ENCODE measurements at regions of chr3 and their contacts with region 1.

Region 1: DNA sequence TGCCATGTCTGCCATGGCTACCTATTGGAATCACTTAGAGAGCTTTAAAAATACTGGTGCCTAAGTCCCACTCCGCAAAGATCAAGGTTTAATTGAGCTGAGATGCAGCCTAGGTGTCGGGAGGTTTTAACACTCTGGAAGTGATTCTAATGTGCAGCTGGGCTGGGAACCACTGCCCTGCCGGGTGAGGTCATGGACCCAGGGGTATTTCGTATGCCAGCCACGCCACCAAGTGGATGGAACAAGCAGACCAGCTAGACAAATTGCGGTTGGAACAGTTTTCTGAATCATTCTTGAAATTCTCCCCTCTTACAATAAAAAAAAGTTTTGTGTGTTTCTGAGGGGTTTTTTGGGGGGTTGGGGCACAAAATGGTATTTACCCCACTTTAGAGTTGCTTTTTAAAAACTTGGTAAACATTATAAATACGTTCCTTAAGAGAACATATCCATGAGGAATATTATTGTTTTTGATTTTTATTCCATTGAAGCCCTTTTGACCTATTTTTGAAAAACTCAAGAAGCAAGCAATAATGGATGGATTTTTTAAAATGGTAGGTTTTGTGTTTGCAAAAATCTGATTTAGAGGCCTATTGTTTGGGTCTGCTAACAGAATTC is 66.2 kb upstream of the CSTA start:
- DNase-seq: peak; percentile 83
- ATAC-seq: peak; percentile 92
- H3K4me3 Mint-ChIP-seq: no peak overlapping the region
- H3K27ac Mint-ChIP-seq: no peak overlapping the region
- H3K4me1 Mint-ChIP-seq: peaks cover 18% of the 10 kb centered on the region
- H3K27me3 Mint-ChIP-seq: no peaks in the 10 kb centered on the region

Region 2: DNA sequence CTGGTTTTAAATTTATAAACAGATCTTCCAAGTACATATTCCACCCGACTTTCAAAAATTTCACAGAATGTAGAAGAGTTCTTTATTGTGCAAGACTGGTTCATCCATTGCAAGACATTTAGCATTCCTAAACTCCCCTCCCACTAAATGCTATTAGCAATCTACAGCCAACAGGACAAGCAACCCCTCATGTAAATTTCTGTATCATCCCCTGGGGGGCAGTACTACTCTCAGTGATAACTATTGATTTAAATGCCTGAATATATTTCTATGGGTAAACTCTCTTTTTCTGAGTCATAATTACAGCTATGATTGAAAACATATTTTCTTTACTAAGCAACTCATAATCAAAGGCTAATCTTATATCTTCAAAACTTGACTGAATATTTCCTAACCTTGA is 375.4 kb before region 1 on chr3:
- CTCF ChIA-PET with region 1: no interaction called
- POLR2A ChIA-PET with region 1: no interaction called
- intact Hi-C with region 1: loop called (anchors 2 to 10 kb)
- DNase-seq: peak; percentile 5
- ATAC-seq: peak; percentile 60
- H3K4me3 Mint-ChIP-seq: no peak overlapping the region
- H3K27ac Mint-ChIP-seq: no peak overlapping the region
- H3K4me1 Mint-ChIP-seq: no peaks in the 10 kb centered on the region
- H3K27me3 Mint-ChIP-seq: no peaks in the 10 kb centered on the region

Region 3: GRCh38 chr3:122233101-122233952 is 25.5 kb before region 1 on chr3:
- CTCF ChIA-PET with region 1: interaction called, 4 read pairs
- POLR2A ChIA-PET with region 1: no interaction called
- intact Hi-C with region 1: loop called in 1 of 2 experiments (anchors 2 kb)
- DNase-seq: peak; percentile 34
- ATAC-seq: peak; percentile 70
- H3K4me3 Mint-ChIP-seq: no peak overlapping the region
- H3K27ac Mint-ChIP-seq: peak overlapping the region; percentile 27
- H3K4me1 Mint-ChIP-seq: peaks cover 25% of the 10 kb centered on the region
- H3K27me3 Mint-ChIP-seq: peaks cover 11% of the 10 kb centered on the region

Region 4: GRCh38 chr3:122299872-122300460 is 41.1 kb after region 1 on chr3:
- CTCF ChIA-PET with region 1: interaction called, 10 read pairs
- POLR2A ChIA-PET with region 1: no interaction called
- intact Hi-C with region 1: loop called (anchors 2 kb)
- DNase-seq: peak; percentile 53
- ATAC-seq: peak; percentile 59
- H3K4me3 Mint-ChIP-seq: no peak overlapping the region
- H3K27ac Mint-ChIP-seq: no peak overlapping the region
- H3K4me1 Mint-ChIP-seq: peaks cover 18% of the 10 kb centered on the region
- H3K27me3 Mint-ChIP-seq: no peaks in the 10 kb centered on the region

Measured in activated CD4-positive, alpha-beta T cell treated with anti-CD3 and anti-CD28 coated beads for 36 hours (primary cell).